ENCODE measurements at regions of chr6 and their contacts with region 1.

Region 1: GRCh38 chr6:131949909-131950766 is 1.0 kb downstream of the CCN2 start:
- DNase-seq: peak; percentile 75
- ATAC-seq: peak; percentile 60
- H3K4me3 ChIP-seq: peak overlapping the region; percentile 78 to 94 (median 93)
- H3K27ac ChIP-seq: peak overlapping the region; percentile 83
- H3K4me1 ChIP-seq: peaks cover 68% of the 10 kb centered on the region
- H3K27me3 ChIP-seq: peaks cover 0 to 3% of the 10 kb centered on the region in 2 experiments; a peak in 1 of 5 replicates
- CTCF ChIP-seq: peak; percentile 83
- EP300 ChIP-seq: no peak
- POLR2A ChIP-seq: peak; percentile 55 to 79
- RAD21 ChIP-seq: peak; percentile 80

Region 2: GRCh38 chr6:131894735-131895424 is 55.3 kb before region 1 on chr6:
- CTCF ChIA-PET with region 1: no interaction called
- POLR2A ChIA-PET with region 1: interaction called, 20 read pairs
- in situ Hi-C with region 1: no loop called
- intact Hi-C with region 1: no loop called
- DNase-seq: peak; percentile 99
- ATAC-seq: peak; percentile 82
- H3K4me3 ChIP-seq: peak overlapping the region in 2 of 3 experiments; percentile 35 to 57; a peak in 3 of 6 replicates
- H3K27ac ChIP-seq: peak overlapping the region; percentile 97
- H3K4me1 ChIP-seq: peaks cover 68% of the 10 kb centered on the region
- H3K27me3 ChIP-seq: no peaks in the 10 kb centered on the region
- CTCF ChIP-seq: no peak
- EP300 ChIP-seq: peak; percentile 91 to 96; a peak in 3 of 4 replicates
- POLR2A ChIP-seq: peak; percentile 30 to 71; a peak in 3 of 4 replicates
- RAD21 ChIP-seq: peak; percentile 38; the same call in 1 of the 2 replicates

Region 3: GRCh38 chr6:131960371-131961133 is 10.4 kb after region 1 on chr6:
- CTCF ChIA-PET with region 1: no interaction called
- POLR2A ChIA-PET with region 1: interaction called, 103 read pairs
- in situ Hi-C with region 1: no loop called
- intact Hi-C with region 1: loop called (anchors 1 kb)
- DNase-seq: no peak
- ATAC-seq: no peak
- H3K4me3 ChIP-seq: no peak overlapping the region
- H3K27ac ChIP-seq: peak overlapping the region; percentile 83
- H3K4me1 ChIP-seq: peaks cover 76% of the 10 kb centered on the region
- H3K27me3 ChIP-seq: no peaks in the 10 kb centered on the region
- CTCF ChIP-seq: peak; percentile 40
- EP300 ChIP-seq: no peak
- POLR2A ChIP-seq: no peak
- RAD21 ChIP-seq: no peak

Region 4: DNA sequence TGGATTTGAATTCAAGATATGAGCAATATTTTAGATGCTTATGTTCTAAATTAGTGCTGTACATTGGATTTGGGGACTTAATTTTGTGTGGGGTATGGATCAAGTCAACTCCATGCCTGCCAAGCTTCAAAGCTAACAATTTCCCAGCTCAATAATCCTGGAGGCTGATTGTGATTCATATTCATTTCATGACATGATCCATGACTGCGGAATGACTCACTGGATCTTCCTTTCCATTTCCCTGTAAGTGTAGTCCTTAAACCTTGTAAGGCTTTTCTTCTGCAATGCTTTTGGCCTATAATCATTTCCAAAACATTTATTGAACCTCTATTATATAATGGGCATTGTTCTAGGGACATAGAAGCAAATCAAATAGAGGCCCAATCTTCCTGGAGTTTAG is 45.8 kb after region 1 on chr6:
- CTCF ChIA-PET with region 1: no interaction called
- POLR2A ChIA-PET with region 1: interaction called, 22 read pairs
- in situ Hi-C with region 1: no loop called
- intact Hi-C with region 1: no loop called
- DNase-seq: no peak
- ATAC-seq: no peak
- H3K4me3 ChIP-seq: no peak overlapping the region
- H3K27ac ChIP-seq: no peak overlapping the region
- H3K4me1 ChIP-seq: peaks cover 25% of the 10 kb centered on the region
- H3K27me3 ChIP-seq: no peaks in the 10 kb centered on the region
- CTCF ChIP-seq: no peak
- EP300 ChIP-seq: no peak
- POLR2A ChIP-seq: no peak
- RAD21 ChIP-seq: no peak

Region 5: GRCh38 chr6:132063738-132064137 is 113.6 kb after region 1 on chr6:
- CTCF ChIA-PET with region 1: no interaction called
- POLR2A ChIA-PET with region 1: interaction called, 4 read pairs
- in situ Hi-C with region 1: no loop called
- intact Hi-C with region 1: loop called (anchors 5 kb)
- DNase-seq: peak; percentile 55
- ATAC-seq: peak; percentile 71
- H3K4me3 ChIP-seq: no peak overlapping the region
- H3K27ac ChIP-seq: no peak overlapping the region
- H3K4me1 ChIP-seq: peaks cover 20% of the 10 kb centered on the region
- H3K27me3 ChIP-seq: no peaks in the 10 kb centered on the region
- CTCF ChIP-seq: no peak
- EP300 ChIP-seq: no peak
- POLR2A ChIP-seq: no peak
- RAD21 ChIP-seq: no peak

Region 6: DNA sequence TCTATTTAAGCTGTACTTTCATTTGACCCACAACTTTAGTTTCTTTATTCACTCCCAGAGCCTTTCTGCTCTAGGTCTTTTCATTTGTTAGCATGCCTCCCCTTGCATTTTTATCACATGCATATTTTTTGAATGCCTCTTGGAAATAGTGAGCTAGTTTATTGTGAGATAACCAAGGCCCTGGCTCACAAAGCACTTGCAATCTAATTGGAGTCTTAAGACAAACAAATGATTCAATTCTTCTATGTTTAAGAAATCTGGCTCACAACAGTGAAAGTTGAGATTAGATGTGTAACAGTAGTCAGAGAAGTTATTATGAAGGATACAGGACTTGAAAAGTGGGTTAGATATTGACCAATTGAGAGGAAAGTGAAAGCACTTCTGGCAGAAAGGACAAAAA is 277.8 kb after region 1 on chr6:
- CTCF ChIA-PET with region 1: no interaction called
- POLR2A ChIA-PET with region 1: no interaction called
- in situ Hi-C with region 1: no loop called
- intact Hi-C with region 1: no loop called
- DNase-seq: no peak
- ATAC-seq: no peak
- H3K4me3 ChIP-seq: no peak overlapping the region
- H3K27ac ChIP-seq: no peak overlapping the region
- H3K4me1 ChIP-seq: no peaks in the 10 kb centered on the region
- H3K27me3 ChIP-seq: no peaks in the 10 kb centered on the region; a peak in 1 of 5 replicates
- CTCF ChIP-seq: no peak
- EP300 ChIP-seq: no peak
- POLR2A ChIP-seq: no peak
- RAD21 ChIP-seq: no peak

Region 7: DNA sequence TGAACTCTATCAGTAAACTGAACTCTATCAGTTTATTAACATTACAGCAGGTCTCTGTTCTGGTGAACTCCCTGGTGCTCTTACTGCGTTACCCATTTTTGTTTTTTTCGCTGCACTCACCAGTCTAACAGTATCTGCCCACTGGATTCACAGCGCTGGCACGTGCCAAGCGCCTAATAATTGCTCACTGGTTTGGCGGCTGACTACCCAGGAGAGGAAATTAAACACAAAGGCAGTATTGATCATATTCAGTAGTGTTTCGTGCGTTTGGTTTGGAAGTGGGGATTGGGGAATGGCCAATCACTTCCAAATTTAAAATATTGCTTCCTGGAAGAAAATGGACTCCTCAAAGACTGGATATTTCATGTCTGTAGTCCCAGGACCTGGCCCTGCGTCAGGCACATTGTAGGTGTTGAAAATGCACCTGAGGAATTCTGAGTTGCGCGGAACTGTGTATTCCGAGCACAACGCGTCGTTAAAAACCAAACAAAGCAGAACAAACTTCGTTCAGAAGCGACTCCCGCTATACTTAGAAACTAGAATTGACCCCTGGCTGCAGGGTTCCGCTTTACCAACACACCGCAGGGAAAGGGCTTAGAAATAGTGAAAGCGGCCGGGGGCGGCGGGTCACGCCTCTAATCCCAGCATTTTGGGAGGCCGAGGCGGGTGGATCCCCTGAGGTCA is 863.2 kb after region 1 on chr6:
- CTCF ChIA-PET with region 1: no interaction called
- POLR2A ChIA-PET with region 1: interaction called, 3 read pairs
- in situ Hi-C with region 1: no loop called
- intact Hi-C with region 1: loop called (anchors 10 kb)
- DNase-seq: peak; percentile 57
- ATAC-seq: peak; percentile 54
- H3K4me3 ChIP-seq: peak overlapping the region; percentile 59 to 96 (median 66)
- H3K27ac ChIP-seq: peak overlapping the region; percentile 95
- H3K4me1 ChIP-seq: peaks cover 43% of the 10 kb centered on the region
- H3K27me3 ChIP-seq: no peaks in the 10 kb centered on the region; a peak in 2 of 5 replicates
- CTCF ChIP-seq: no peak
- EP300 ChIP-seq: no peak
- POLR2A ChIP-seq: no peak; a peak in 1 of 4 replicates
- RAD21 ChIP-seq: no peak